GM12878 (cell line): ENCODE measurements at regions of chr3 and their contacts with region 1.

Region 1: GRCh38 chr3:140863580-140864009 is 78.0 kb upstream of the SLC25A36 start:
- DNase-seq: peak; percentile 44
- ATAC-seq: peak; percentile 88
- H3K4me3 ChIP-seq: no peak overlapping the region
- H3K27ac ChIP-seq: no peak overlapping the region
- H3K4me1 ChIP-seq: no peaks in the 10 kb centered on the region
- H3K27me3 ChIP-seq: no peaks in the 10 kb centered on the region; a peak in 1 of 4 replicates
- CTCF ChIP-seq: peak; percentile 33 to 66 (median 34); a peak in 5 of 6 replicates
- EP300 ChIP-seq: no peak
- POLR2A ChIP-seq: no peak
- RAD21 ChIP-seq: peak; percentile 86

Region 2: DNA sequence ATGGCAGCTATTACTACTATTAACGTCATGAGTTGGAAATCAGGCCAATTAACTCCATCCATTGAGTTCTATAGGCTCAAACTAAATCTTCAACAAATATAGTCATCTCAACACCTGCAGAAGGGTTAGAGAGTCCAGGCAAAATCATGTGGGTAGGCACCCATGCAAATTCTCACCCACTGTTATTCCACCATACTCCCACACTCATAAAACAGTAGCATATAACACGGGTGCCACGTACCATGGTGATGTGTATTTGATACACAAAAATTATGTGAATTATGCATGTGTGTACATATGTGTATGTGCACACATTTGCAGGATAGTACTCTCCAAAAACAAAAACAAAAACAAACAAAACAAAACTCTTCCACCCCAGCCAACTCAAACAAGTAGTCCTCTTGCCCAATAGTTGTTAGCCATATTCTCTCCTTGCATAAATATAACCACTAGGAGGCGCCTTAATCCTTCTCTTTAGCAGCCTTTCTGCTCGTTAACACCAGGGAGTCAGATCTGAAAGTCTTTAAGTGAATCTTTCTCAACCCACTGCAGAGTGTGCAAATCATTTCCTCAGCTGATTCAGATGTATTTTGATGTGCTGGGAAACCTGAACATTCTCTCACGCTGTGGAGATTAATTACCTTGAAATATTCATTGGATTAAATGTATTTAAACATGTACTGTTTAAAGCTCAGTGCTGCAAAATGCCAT is 1436.2 kb before region 1 on chr3:
- CTCF ChIA-PET with region 1: interaction called, 3 read pairs
- POLR2A ChIA-PET with region 1: no interaction called
- RAD21 ChIA-PET with region 1: no interaction called
- SMC1A ChIA-PET with region 1: no interaction called
- in situ Hi-C with region 1: loop called (anchors 25 kb)
- intact Hi-C with region 1: loop called (anchors 5 kb)
- DNase-seq: peak; percentile 16
- ATAC-seq: peak; percentile 94
- H3K4me3 ChIP-seq: no peak overlapping the region
- H3K27ac ChIP-seq: no peak overlapping the region
- H3K4me1 ChIP-seq: no peaks in the 10 kb centered on the region
- H3K27me3 ChIP-seq: no peaks in the 10 kb centered on the region
- CTCF ChIP-seq: peak; percentile 67 to 79 (median 77)
- EP300 ChIP-seq: no peak
- POLR2A ChIP-seq: no peak
- RAD21 ChIP-seq: peak; percentile 90

Region 3: DNA sequence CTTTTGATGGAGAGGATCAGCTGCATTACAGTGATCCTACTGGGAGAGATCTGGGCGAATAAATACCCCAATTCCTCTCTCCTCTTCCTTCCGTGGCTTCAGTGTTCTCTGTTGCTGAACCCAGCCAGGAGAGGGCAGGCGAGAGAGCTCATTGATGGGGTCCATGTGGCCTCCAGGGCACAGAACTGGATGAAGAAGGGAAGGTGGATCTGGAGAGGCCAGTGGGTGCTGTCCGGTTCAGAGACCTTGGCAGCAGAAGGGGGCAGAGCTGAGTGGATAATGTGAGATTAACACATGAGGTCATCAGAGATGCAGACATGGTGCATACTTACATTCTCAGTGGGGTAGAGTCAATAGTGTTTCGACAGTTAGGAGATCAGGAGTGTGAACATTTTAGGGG is 735.0 kb before region 1 on chr3:
- CTCF ChIA-PET with region 1: interaction called, 12 read pairs
- POLR2A ChIA-PET with region 1: no interaction called
- RAD21 ChIA-PET with region 1: interaction called, 7 read pairs
- SMC1A ChIA-PET with region 1: interaction called, 8 read pairs
- in situ Hi-C with region 1: loop called (anchors 25 kb)
- intact Hi-C with region 1: loop called (anchors 2 kb)
- DNase-seq: no peak
- ATAC-seq: peak; percentile 95
- H3K4me3 ChIP-seq: no peak overlapping the region
- H3K27ac ChIP-seq: no peak overlapping the region
- H3K4me1 ChIP-seq: no peaks in the 10 kb centered on the region
- H3K27me3 ChIP-seq: peaks cover 0 to 2% of the 10 kb centered on the region in 2 experiments; a peak in 2 of 4 replicates
- CTCF ChIP-seq: peak; percentile 71 to 84 (median 72)
- EP300 ChIP-seq: no peak
- POLR2A ChIP-seq: no peak
- RAD21 ChIP-seq: peak; percentile 85

Region 4: DNA sequence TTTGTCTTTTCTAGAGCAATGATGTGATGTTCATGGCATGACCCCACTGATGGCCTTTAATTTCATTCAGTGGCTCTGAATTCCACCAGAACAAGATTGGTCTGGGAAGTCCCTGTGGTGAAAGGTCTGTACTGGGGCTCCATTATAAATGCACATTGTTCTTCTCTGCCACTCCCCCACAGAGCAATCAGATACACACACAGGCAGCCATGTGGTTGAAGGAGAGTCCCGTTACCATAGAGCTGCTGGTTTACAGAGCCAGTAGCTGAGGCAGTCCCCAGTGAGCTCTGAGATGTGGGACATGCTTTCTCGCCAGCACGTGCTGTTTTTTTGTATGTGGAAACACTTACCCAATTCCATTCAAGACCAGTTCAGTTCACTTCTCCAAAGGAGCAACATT is 358.4 kb before region 1 on chr3:
- CTCF ChIA-PET with region 1: interaction called, 4 read pairs
- POLR2A ChIA-PET with region 1: no interaction called
- RAD21 ChIA-PET with region 1: interaction called, 4 read pairs
- SMC1A ChIA-PET with region 1: no interaction called
- in situ Hi-C with region 1: no loop called
- intact Hi-C with region 1: loop called (anchors 2 kb)
- DNase-seq: peak; percentile 33
- ATAC-seq: peak; percentile 98
- H3K4me3 ChIP-seq: no peak overlapping the region
- H3K27ac ChIP-seq: no peak overlapping the region
- H3K4me1 ChIP-seq: no peaks in the 10 kb centered on the region
- H3K27me3 ChIP-seq: no peaks in the 10 kb centered on the region; a peak in 1 of 4 replicates
- CTCF ChIP-seq: no peak
- EP300 ChIP-seq: peak in 1 of 2 experiments; percentile 29; a peak in 1 of 4 replicates
- POLR2A ChIP-seq: no peak
- RAD21 ChIP-seq: no peak

Region 5: GRCh38 chr3:140636406-140637130 is 227.0 kb before region 1 on chr3:
- CTCF ChIA-PET with region 1: no interaction called
- POLR2A ChIA-PET with region 1: no interaction called
- RAD21 ChIA-PET with region 1: interaction called, 3 read pairs
- SMC1A ChIA-PET with region 1: no interaction called
- in situ Hi-C with region 1: no loop called
- intact Hi-C with region 1: loop called (anchors 2 kb)
- DNase-seq: no peak
- ATAC-seq: no peak
- H3K4me3 ChIP-seq: no peak overlapping the region
- H3K27ac ChIP-seq: no peak overlapping the region
- H3K4me1 ChIP-seq: no peaks in the 10 kb centered on the region
- H3K27me3 ChIP-seq: no peaks in the 10 kb centered on the region
- CTCF ChIP-seq: no peak
- EP300 ChIP-seq: no peak
- POLR2A ChIP-seq: no peak
- RAD21 ChIP-seq: no peak

Region 6: GRCh38 chr3:140753865-140754754 is 109.5 kb before region 1 on chr3:
- CTCF ChIA-PET with region 1: interaction called, 13 read pairs
- POLR2A ChIA-PET with region 1: no interaction called
- RAD21 ChIA-PET with region 1: no interaction called
- SMC1A ChIA-PET with region 1: interaction called, 7 read pairs
- in situ Hi-C with region 1: no loop called
- intact Hi-C with region 1: loop called (anchors 1 kb)
- DNase-seq: peak; percentile 87
- ATAC-seq: peak; percentile 86
- H3K4me3 ChIP-seq: no peak overlapping the region
- H3K27ac ChIP-seq: no peak overlapping the region
- H3K4me1 ChIP-seq: peaks cover 23% of the 10 kb centered on the region
- H3K27me3 ChIP-seq: no peaks in the 10 kb centered on the region
- CTCF ChIP-seq: peak in 2 of 3 experiments; percentile 8 to 19; a peak in 1 of 6 replicates
- EP300 ChIP-seq: peak; percentile 89 to 91
- POLR2A ChIP-seq: no peak
- RAD21 ChIP-seq: peak; percentile 6; the same call in 1 of the 2 replicates

Region 7: DNA sequence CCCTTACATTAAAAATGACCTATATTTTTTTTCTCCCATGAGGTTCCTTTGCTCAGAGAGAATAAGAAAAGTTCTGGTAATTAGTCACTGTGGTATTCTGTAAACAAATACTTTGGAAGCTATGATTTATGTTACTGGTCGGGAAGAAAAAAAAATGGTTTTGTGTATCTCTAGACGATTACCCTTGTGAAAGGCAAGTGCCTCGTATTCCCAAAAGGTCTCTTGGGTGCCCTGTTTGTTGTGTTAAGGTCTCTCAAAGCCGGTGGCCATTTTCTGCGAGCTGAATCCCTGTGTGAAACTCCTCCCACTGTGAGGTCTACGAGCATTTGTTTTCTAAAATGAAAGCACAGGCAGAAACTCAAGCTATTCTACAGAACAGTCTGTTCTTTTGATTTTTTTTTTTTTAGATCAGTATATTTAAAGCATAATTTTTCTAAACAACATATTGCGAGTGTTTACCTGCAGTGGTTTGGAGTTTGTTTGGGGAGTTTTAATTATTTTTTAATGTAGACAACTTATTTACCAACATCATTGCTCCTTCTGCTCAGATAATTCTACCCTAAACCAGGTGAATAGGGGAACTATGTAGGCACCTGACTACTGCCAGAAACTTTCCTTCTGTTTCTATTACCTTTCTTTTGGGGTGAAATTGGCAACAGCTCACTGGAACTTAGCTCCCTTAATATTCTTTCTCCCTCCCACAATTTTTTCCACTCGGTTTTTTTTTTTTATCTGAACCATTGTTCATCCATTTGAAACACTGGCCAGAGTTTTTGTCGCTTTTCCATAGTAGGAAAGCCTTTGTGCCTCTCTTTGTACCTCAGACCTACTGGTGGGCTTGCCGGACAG is 548.7 kb after region 1 on chr3:
- CTCF ChIA-PET with region 1: no interaction called
- POLR2A ChIA-PET with region 1: no interaction called
- RAD21 ChIA-PET with region 1: no interaction called
- SMC1A ChIA-PET with region 1: no interaction called
- in situ Hi-C with region 1: no loop called
- intact Hi-C with region 1: no loop called
- DNase-seq: no peak
- ATAC-seq: peak; percentile 63
- H3K4me3 ChIP-seq: peak overlapping the region; percentile 57
- H3K27ac ChIP-seq: peak overlapping the region; percentile 92
- H3K4me1 ChIP-seq: peaks cover 63% of the 10 kb centered on the region
- H3K27me3 ChIP-seq: no peaks in the 10 kb centered on the region
- CTCF ChIP-seq: no peak
- EP300 ChIP-seq: no peak
- POLR2A ChIP-seq: 0 out of 2 replicates have a peak, but pooled peaks have one; percentile 34
- RAD21 ChIP-seq: no peak